Gastrocnemius medialis (tissue), 4 donors: ENCODE measurements at regions of chr22 and their contacts with region 1.

Region 1: DNA sequence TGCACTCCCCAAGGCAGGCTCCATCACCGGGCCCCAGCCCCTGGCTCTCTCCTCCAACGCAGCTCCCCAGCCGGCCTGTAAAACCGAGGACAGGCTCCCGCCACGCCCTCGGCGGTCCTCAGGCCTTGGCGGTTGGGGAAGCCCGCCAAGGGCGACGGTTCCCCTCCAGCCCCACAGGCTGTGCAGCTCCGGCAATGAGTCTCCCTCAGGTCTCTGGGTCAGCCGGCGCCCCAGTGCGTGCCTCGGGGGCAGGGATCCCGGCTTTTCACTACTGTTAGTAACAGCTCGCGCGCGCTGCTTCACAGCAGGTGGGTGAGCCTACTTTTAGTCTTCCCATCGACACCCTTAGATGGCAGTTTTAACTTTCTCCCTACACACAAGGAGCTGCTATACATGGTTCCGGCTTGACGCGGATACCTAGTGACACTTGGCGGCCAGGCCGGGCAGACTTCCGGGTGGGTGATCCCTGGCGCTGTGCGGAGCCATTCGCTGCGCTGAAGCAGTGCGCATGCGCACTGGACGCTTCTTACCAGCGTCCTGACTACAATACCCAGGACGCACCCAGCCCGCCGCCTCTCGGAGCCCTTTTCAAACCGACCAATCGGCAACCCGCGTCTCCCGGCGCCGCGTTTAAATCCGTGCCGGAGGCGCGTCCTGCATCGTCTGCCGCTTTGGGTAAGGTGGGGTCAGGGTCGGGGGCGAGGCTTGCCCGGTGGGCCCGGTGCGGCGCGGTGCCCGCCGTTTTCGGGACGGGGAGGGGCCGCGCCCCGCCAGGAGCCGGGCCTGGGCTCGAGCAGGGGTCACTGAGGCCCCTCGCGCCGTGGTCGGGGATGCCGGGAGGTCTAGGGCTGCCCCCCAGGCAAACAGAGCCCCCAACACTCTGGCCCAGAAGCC is at the start of gene GTSE1:
- DNase-seq: peak; percentile 96 to 98
- ATAC-seq: peak; percentile 94 to 98
- H3K4me3 ChIP-seq: peak within 1 kb of the TSS; percentile 59 to 82 (median 74)
- H3K27ac ChIP-seq: peak within 1 kb of the TSS; percentile 87 to 92 (median 88)
- H3K4me1 ChIP-seq: peaks cover 8 to 14% of the 10 kb centered on the region in 2 donors
- H3K27me3 ChIP-seq: no peaks in the 10 kb centered on the region
- CTCF ChIP-seq: peak in 3 of 5 experiments; percentile 18 to 41 (median 24)
- POLR2A ChIP-seq: peak; percentile 45 to 54
- total RNA-seq, gene GTSE1: 0.13 to 0.49 TPM in 2 of 4 donors, not detected in the others

Region 2: DNA sequence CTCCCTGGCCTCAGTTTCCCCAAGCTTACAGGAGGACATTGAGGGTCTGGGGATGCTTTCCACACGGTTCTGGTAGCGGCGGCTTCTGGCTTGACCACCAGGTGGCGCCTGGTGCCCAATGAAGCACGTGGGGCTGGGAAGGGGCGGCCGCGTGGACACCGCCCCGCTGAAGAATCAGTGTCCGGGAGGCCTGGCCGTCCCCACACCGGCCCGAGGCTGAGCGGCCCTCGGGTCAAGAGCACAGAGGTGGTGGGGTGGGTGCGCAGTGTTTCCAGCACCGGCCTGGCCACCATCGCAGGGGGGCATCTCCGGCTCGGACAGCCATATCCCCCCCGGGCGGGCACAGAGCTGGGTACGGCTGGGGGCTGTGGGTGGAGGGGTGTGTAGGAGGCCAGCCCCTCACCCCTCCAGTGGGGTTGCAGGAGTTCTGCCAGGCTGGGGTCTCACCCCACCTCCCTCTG is 174.0 kb before region 1 on chr22:
- in situ Hi-C with region 1: no loop called
- intact Hi-C with region 1: loop called (anchors 1 kb)
- DNase-seq: peak in 1 of 2 donors; percentile 65
- ATAC-seq: peak; percentile 52 to 72
- H3K4me3 ChIP-seq: peak overlapping the region in 1 of 4 donors; percentile 29
- H3K27ac ChIP-seq: no peak overlapping the region
- H3K4me1 ChIP-seq: peaks cover 4% of the 10 kb centered on the region in 2 donors
- H3K27me3 ChIP-seq: no peaks in the 10 kb centered on the region
- CTCF ChIP-seq: peak; percentile 94 to 99 (median 98)
- POLR2A ChIP-seq: no peak

Region 3: DNA sequence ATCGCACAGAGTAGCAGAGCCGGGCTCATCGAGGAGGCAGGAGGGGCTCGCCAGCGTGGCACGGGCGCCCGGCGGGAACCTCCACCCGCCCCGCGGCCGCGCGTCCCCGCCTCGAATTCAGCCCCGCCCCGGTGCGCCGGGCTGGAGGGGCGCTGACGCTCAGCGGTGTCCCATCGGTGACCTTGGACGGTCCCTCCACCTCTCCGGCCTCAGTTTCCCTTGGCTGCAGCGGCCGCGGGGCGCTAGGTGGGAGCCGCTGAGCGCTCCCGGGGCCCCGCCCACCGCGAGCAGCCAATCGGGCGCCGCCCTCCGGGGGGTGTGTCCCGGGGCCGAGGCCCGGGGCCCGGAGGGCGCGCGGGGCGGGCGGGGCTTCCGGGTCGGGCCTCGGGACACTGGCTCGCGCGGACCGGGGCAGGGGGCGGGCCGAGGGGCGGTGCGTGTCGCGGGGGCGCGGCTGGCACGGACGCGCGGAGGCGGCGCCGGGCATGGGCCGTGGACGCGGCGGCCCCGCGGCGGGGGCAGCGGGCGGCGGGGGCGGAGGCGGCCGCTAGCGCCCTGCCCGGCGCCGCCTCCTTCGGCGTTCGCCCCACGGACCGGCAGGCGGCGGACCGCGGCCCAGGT is 146.4 kb before region 1 on chr22 and contains the start of gene PPARA:
- in situ Hi-C with region 1: no loop called
- intact Hi-C with region 1: loop called (anchors 1 kb)
- DNase-seq: peak; percentile 85 to 90
- ATAC-seq: peak; percentile 75 to 81
- H3K4me3 ChIP-seq: peak within 1 kb of the TSS; percentile 83 to 92 (median 86)
- H3K27ac ChIP-seq: peak within 1 kb of the TSS; percentile 96 to 98 (median 98)
- H3K4me1 ChIP-seq: peaks cover 35 to 40% of the 10 kb centered on the region in 2 donors
- H3K27me3 ChIP-seq: no peaks in the 10 kb centered on the region
- CTCF ChIP-seq: no peak
- POLR2A ChIP-seq: peak; percentile 83 to 84
- total RNA-seq, gene PPARA: 29.6 to 74.8 (median 57.9) TPM

Region 4: GRCh38 chr22:46250035-46250782 is 46.3 kb before region 1 on chr22 and contains the start of gene CDPF1:
- in situ Hi-C with region 1: no loop called
- intact Hi-C with region 1: loop called (anchors 2 kb)
- DNase-seq: peak; percentile 86
- ATAC-seq: peak; percentile 86 to 87
- H3K4me3 ChIP-seq: peak within 1 kb of the TSS; percentile 85 to 96 (median 87)
- H3K27ac ChIP-seq: peak within 1 kb of the TSS; percentile 91 to 96 (median 94)
- H3K4me1 ChIP-seq: peaks cover 17 to 28% of the 10 kb centered on the region in 2 donors
- H3K27me3 ChIP-seq: no peaks in the 10 kb centered on the region
- CTCF ChIP-seq: peak in 1 of 5 experiments; percentile 12
- POLR2A ChIP-seq: peak; percentile 89 to 90
- total RNA-seq, gene CDPF1: 6.3 to 18.8 (median 12.5) TPM

Region 5: GRCh38 chr22:46267431-46268279 is 28.8 kb before region 1 on chr22 and contains the start of gene TTC38:
- in situ Hi-C with region 1: no loop called
- intact Hi-C with region 1: loop called (anchors 2 kb)
- DNase-seq: peak; percentile 90 to 96
- ATAC-seq: peak; percentile 95 to 96
- H3K4me3 ChIP-seq: peak within 1 kb of the TSS; percentile 75 to 99 (median 80)
- H3K27ac ChIP-seq: peak within 1 kb of the TSS; percentile 89 to 97 (median 92)
- H3K4me1 ChIP-seq: peaks cover 10 to 20% of the 10 kb centered on the region in 2 donors
- H3K27me3 ChIP-seq: no peaks in the 10 kb centered on the region
- CTCF ChIP-seq: no peak
- POLR2A ChIP-seq: peak; percentile 62 to 71
- total RNA-seq, gene TTC38: 30.4 to 58.3 (median 43.1) TPM

Region 6: GRCh38 chr22:46280999-46281623 is 15.4 kb before region 1 on chr22:
- in situ Hi-C with region 1: no loop called
- intact Hi-C with region 1: no loop called
- DNase-seq: peak; percentile 30 to 42
- ATAC-seq: peak; percentile 73 to 82
- H3K4me3 ChIP-seq: no peak overlapping the region
- H3K27ac ChIP-seq: peak overlapping the region in 3 of 4 donors; percentile 77 to 83 (median 78)
- H3K4me1 ChIP-seq: peaks cover 16 to 17% of the 10 kb centered on the region in 2 donors
- H3K27me3 ChIP-seq: no peaks in the 10 kb centered on the region
- CTCF ChIP-seq: no peak
- POLR2A ChIP-seq: no peak